CD4-positive, alpha-beta T cell (primary cell): ENCODE measurements at regions of chr1 and their contacts with region 1.

Region 1: GRCh38 chr1:119773711-119774241 is 5.1 kb upstream of the HMGCS2 start:
- DNase-seq: no peak
- ATAC-seq: no peak
- H3K4me3 ChIP-seq: no peak overlapping the region
- H3K4me3 Mint-ChIP-seq: no peak overlapping the region
- H3K27ac ChIP-seq: no peak overlapping the region
- H3K27ac Mint-ChIP-seq: no peak overlapping the region
- H3K4me1 ChIP-seq: no peaks in the 10 kb centered on the region
- H3K4me1 Mint-ChIP-seq: no peaks in the 10 kb centered on the region
- H3K27me3 ChIP-seq: peaks cover 6 to 8% of the 10 kb centered on the region in 2 experiments
- H3K27me3 Mint-ChIP-seq: peaks cover 7% of the 10 kb centered on the region
- CTCF ChIP-seq: no peak

Region 2: DNA sequence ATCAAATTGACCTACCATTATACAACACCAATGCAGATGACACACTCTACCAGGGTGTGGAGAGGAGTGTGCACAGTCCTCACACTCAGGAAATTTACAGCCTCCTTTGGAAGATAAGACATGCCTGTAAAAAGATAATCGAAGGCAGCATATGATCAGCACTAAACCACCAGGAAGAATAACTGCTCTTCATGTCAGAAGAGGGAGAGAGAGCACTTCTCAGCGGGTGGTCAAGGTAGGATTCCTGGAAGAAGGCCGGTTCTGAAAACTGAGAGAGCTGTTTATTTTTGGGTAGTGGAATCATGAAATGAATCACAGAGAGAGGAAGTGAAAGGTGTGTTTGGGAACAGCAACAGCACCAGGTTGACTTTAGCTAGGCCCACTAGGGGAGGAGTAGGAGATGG is 111.7 kb before region 1 on chr1:
- CTCF ChIA-PET with region 1: no interaction called
- POLR2A ChIA-PET with region 1: no interaction called
- intact Hi-C with region 1: no loop called
- DNase-seq: no peak
- ATAC-seq: no peak
- H3K4me3 ChIP-seq: no peak overlapping the region
- H3K4me3 Mint-ChIP-seq: no peak overlapping the region
- H3K27ac ChIP-seq: no peak overlapping the region
- H3K27ac Mint-ChIP-seq: no peak overlapping the region
- H3K4me1 ChIP-seq: no peaks in the 10 kb centered on the region
- H3K4me1 Mint-ChIP-seq: no peaks in the 10 kb centered on the region
- H3K27me3 ChIP-seq: peaks cover 4 to 8% of the 10 kb centered on the region in 2 experiments
- H3K27me3 Mint-ChIP-seq: peaks cover 39% of the 10 kb centered on the region
- CTCF ChIP-seq: no peak

Region 3: DNA sequence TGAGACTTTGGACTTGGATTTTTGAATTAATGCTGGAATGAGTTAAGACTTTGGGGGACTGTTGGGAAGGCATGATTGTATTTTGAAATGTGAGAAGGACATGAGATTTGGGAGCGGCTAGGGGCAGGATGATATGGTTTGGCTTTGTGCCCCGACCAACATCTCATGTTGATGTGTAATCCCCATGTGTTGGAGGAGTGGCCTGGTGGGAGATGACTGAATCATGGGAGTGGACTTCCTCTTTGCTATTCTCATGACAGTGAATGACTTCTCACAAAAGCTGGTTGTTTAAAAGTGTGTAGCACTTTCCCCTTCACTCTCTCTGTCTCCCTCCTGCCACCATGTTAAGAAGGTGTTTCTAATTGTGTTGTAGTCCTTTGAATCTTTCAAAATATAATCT is 71.4 kb before region 1 on chr1:
- CTCF ChIA-PET with region 1: no interaction called
- POLR2A ChIA-PET with region 1: no interaction called
- intact Hi-C with region 1: no loop called
- DNase-seq: peak in 2 of 14 experiments; percentile 13 to 39
- ATAC-seq: no peak
- H3K4me3 ChIP-seq: no peak overlapping the region
- H3K4me3 Mint-ChIP-seq: no peak overlapping the region
- H3K27ac ChIP-seq: no peak overlapping the region
- H3K27ac Mint-ChIP-seq: no peak overlapping the region
- H3K4me1 ChIP-seq: no peaks in the 10 kb centered on the region
- H3K4me1 Mint-ChIP-seq: no peaks in the 10 kb centered on the region
- H3K27me3 ChIP-seq: no peaks in the 10 kb centered on the region
- H3K27me3 Mint-ChIP-seq: peaks cover 45% of the 10 kb centered on the region
- CTCF ChIP-seq: no peak

Region 4: DNA sequence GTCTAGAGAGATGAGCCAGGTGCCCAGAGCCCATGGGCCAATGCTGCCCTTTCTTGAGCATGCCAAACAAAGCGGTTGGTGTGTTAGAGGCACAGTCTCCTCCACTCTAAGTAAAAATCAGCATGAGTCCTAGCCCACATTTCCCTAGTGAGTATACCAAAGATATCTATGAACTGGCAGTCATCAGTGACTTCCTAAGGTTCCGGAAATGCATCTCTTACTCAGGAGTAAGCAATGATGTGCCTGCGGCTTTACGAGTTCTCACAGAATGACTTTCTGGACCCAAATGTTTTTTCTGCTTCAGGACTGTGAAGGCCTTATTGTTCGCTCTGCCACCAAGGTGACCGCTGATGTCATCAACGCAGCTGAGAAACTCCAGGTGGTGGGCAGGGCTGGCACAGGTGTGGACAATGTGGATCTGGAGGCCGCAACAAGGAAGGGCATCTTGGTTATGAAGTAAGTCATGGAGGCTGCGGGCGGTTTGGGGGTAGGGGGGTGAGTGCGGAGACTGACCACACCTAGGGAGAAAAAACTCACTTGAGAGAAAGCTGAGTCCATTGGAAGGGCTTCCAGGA is 52.8 kb before region 1 on chr1:
- CTCF ChIA-PET with region 1: no interaction called
- POLR2A ChIA-PET with region 1: no interaction called
- intact Hi-C with region 1: loop called in 1 of 2 experiments (anchors 5 kb)
- DNase-seq: no peak
- ATAC-seq: no peak
- H3K4me3 ChIP-seq: no peak overlapping the region
- H3K4me3 Mint-ChIP-seq: no peak overlapping the region
- H3K27ac ChIP-seq: no peak overlapping the region
- H3K27ac Mint-ChIP-seq: no peak overlapping the region
- H3K4me1 ChIP-seq: no peaks in the 10 kb centered on the region
- H3K4me1 Mint-ChIP-seq: peaks cover 8% of the 10 kb centered on the region
- H3K27me3 ChIP-seq: no peaks in the 10 kb centered on the region
- H3K27me3 Mint-ChIP-seq: no peaks in the 10 kb centered on the region
- CTCF ChIP-seq: no peak